ENCODE measurements at regions of chr17 and their contacts with region 1.

Region 1: DNA sequence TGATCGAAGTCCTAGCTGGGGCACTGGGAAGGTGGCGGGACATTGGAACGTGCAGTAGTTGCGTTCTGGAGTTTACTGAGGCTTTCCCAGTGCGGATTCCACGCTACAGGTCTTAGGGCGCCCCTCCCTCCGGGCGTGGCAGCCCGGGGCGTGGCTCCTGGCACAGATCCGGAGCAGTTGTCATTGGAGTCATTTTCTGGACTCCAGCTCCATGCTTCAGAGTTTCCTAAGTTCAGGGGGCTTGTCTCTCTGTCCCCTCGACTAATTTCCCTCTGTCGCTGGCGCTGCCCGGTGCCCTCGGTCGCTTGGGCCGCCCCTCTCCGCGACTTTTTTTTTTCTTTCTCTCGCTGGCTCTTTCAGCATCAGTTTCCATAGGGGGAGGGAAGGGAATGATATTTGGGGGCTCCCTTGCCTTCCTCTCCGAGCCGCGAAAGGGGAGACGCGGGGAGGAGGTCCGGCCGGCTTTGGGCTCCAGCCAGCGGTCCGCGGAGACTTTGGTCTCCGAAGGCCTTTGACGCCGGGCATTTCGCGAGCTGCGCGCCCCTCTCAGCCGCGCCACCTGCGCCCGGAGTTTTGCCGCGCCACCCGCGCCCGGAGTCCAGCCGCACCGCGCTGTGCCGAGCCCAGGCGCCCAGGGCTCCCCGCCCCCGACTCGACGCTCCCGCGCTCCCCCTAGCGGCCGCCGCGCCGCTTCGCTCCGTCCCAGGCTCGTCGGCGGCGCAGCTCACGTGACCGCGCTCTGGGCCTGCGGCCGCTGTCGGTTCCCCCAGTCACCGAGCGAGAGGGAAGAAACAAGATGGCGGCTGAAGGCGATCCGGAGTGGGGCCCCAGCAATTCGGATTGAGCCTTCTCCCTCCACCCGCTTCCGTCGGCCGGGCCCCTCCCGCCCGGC is at the start of gene BPTF:
- DNase-seq: peak; percentile 99
- H3K4me3 ChIP-seq: peak within 1 kb of the TSS; percentile 77 to 87
- H3K27ac ChIP-seq: peak within 1 kb of the TSS; percentile 34 to 94; a peak in 3 of 4 replicates
- H3K4me1 ChIP-seq: peaks cover 12 to 20% of the 10 kb centered on the region in 2 experiments; a peak in 3 of 4 replicates
- H3K27me3 ChIP-seq: no peaks in the 10 kb centered on the region
- CTCF ChIP-seq: peak; percentile 93
- EP300 ChIP-seq: peak in 1 of 2 experiments; percentile 47; a peak in 1 of 4 replicates
- RAD21 ChIP-seq: peak; percentile 56
- polyA plus RNA-seq, gene BPTF: 51.9 and 61.4 TPM in 2 replicates

Region 2: DNA sequence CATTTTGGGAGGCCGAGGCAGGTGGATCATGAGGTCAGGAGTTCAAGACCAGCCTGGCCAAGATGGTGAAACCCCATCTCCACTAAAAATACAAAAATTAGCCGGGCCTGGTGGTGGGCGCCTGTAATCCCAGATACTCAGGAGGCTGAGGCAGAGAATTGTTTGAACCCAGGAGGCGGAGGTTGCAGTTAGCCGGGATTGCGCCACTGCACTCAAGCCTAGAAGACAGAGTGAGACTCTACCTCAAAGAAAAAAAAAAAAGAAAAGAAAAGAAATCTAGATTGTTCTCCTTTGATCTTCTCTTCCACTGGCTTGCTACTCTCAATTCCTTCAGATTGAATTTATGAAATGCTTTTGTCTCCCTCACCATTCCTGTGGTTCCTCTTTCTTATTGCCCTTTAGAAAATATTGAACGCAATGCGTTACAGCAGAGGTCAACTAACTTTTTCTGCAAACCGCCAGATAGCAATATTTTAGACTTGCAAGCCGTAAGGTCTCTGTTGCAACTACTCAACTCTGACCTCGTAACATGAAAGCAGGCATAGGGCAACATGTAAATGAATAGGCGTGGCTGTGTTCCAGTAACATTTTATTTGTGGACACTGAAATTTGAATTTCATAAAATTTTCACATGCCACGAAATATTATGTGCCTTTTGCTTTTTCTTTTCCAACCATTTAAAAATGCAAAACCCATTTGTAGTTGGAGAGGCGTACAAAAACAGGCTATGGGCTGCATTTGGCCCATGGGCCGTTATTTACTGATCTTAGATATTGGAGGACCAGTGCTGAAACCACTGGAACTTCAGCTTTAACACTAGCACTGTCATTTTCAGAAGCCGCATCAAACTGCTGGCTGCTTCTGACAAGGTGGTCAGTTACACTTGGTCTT is 423.1 kb before region 1 on chr17:
- CTCF ChIA-PET with region 1: no interaction called
- POLR2A ChIA-PET with region 1: no interaction called
- DNase-seq: no peak
- H3K4me3 ChIP-seq: no peak overlapping the region
- H3K27ac ChIP-seq: no peak overlapping the region
- H3K4me1 ChIP-seq: peaks cover 6% of the 10 kb centered on the region in 2 experiments; a peak in 2 of 4 replicates
- H3K27me3 ChIP-seq: no peaks in the 10 kb centered on the region
- CTCF ChIP-seq: no peak
- EP300 ChIP-seq: no peak
- RAD21 ChIP-seq: no peak

Region 3: DNA sequence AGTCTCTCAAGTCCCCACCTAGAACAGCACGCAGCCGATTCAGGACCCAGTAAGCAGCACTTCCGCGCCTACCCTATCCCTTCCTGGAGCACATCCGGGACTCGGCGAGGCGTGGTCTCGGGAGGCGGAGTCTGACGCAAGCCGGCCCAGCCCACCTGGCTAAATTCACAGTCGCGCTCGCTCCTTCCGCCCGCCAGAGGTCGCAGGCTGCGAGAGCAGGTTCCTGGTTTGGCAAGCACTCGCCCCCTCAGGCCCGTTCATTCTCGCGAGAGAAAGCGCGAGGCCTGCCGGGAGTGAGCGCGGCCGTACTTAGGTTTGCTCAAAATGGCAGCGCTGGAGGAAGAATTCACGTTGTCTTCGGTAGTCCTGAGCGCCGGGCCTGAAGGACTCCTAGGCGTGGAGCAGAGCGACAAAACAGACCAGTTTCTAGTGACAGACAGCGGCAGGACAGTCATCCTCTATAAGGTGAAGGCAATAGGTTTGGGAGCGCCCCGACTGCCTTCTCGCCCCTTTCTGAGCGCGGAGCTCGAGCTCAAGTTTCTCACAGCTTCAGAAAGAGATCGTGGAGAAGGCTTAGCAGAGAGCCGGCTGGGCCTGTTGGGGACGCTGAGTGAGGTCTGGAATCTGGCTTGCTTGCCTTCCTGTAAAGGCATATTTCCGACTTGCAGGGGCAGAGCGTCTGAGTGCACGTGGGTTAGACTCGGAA is 107.2 kb before region 1 on chr17 and contains the start of gene NOL11:
- CTCF ChIA-PET with region 1: interaction called, 12 read pairs
- POLR2A ChIA-PET with region 1: interaction called, 3 read pairs
- DNase-seq: peak; percentile 99
- H3K4me3 ChIP-seq: peak within 1 kb of the TSS; percentile 94 to 96
- H3K27ac ChIP-seq: peak within 1 kb of the TSS; percentile 89 to 94
- H3K4me1 ChIP-seq: peaks cover 6 to 7% of the 10 kb centered on the region in 2 experiments; a peak in 3 of 4 replicates
- H3K27me3 ChIP-seq: no peaks in the 10 kb centered on the region
- CTCF ChIP-seq: peak; percentile 98
- EP300 ChIP-seq: peak in 1 of 2 experiments; percentile 28; a peak in 2 of 4 replicates
- RAD21 ChIP-seq: peak; percentile 70
- polyA plus RNA-seq, gene NOL11: 27.0 and 36.2 TPM in 2 replicates

Region 4: GRCh38 chr17:67779098-67779672 is 45.8 kb before region 1 on chr17:
- CTCF ChIA-PET with region 1: interaction called, 12 read pairs
- POLR2A ChIA-PET with region 1: no interaction called
- DNase-seq: peak; percentile 88
- H3K4me3 ChIP-seq: peak overlapping the region; percentile 6 to 37; a peak in 1 of 4 replicates
- H3K27ac ChIP-seq: peak overlapping the region in 1 of 2 experiments; percentile 60; a peak in 1 of 4 replicates
- H3K4me1 ChIP-seq: peaks cover 0 to 3% of the 10 kb centered on the region in 2 experiments; a peak in 1 of 4 replicates
- H3K27me3 ChIP-seq: no peaks in the 10 kb centered on the region
- CTCF ChIP-seq: peak; percentile 88
- EP300 ChIP-seq: no peak
- RAD21 ChIP-seq: peak; percentile 66

Region 5: DNA sequence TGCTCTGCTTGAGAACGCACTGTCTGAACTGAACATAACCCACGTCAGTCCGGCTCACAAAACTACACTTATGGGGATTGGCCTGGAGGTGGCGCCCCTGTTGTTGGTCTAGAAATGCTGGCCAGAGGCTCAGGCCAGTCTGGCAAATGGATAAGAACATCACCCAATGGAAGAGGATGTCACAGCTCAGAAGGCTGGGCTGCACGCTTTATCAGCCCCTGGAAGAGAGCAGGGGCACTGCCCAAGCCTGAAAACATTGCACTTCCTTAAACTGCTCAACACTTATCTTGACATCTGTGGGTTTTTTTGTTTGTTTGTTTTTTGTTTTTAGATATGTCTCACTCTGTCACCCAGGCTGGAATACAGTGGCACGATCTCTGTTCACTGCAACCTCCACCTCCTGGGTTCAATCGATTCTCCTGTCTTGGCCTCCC is 24.5 kb before region 1 on chr17:
- CTCF ChIA-PET with region 1: interaction called, 27 read pairs
- POLR2A ChIA-PET with region 1: interaction called, 3 read pairs
- DNase-seq: peak; percentile 85
- H3K4me3 ChIP-seq: no peak overlapping the region
- H3K27ac ChIP-seq: no peak overlapping the region
- H3K4me1 ChIP-seq: no peaks in the 10 kb centered on the region
- H3K27me3 ChIP-seq: no peaks in the 10 kb centered on the region
- CTCF ChIP-seq: peak; percentile 88
- EP300 ChIP-seq: no peak
- RAD21 ChIP-seq: peak; percentile 95

Region 6: DNA sequence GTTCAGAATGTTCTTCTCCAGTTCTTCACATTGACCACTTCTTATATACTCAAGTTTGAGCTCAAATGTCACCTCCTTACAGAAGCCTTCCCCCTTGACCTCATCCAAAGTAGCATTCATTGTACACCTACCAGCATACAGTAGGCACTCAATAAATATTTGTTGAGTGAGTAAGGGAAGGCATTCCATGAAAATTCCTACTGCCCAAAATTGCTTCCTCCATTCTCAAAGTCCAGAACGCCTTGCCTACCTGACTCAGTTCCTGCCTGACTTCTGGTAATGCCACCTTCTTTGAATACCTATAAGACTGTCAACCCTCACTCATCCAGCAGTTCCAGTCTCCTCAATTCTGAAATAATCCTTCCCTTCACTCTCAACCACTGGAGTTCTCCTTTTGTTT is 14.5 kb before region 1 on chr17:
- CTCF ChIA-PET with region 1: interaction called, 12 read pairs
- POLR2A ChIA-PET with region 1: no interaction called
- DNase-seq: no peak
- H3K4me3 ChIP-seq: no peak overlapping the region
- H3K27ac ChIP-seq: no peak overlapping the region
- H3K4me1 ChIP-seq: no peaks in the 10 kb centered on the region
- H3K27me3 ChIP-seq: no peaks in the 10 kb centered on the region
- CTCF ChIP-seq: no peak
- EP300 ChIP-seq: no peak
- RAD21 ChIP-seq: no peak

Region 7: GRCh38 chr17:67836205-67836987 is 11.4 kb after region 1 on chr17:
- CTCF ChIA-PET with region 1: interaction called, 10 read pairs
- POLR2A ChIA-PET with region 1: interaction called, 3 read pairs
- DNase-seq: no peak
- H3K4me3 ChIP-seq: peak overlapping the region in 1 of 2 experiments; percentile 6; a peak in 2 of 4 replicates
- H3K27ac ChIP-seq: peak overlapping the region; percentile 7 to 73; a peak in 3 of 4 replicates
- H3K4me1 ChIP-seq: peaks cover 3 to 10% of the 10 kb centered on the region in 2 experiments; a peak in 3 of 4 replicates
- H3K27me3 ChIP-seq: no peaks in the 10 kb centered on the region
- CTCF ChIP-seq: no peak
- EP300 ChIP-seq: 0 out of 4 replicates have a peak, but pooled peaks of 1 of the 2 experiments have one; percentile 12
- RAD21 ChIP-seq: no peak